ENCODE measurements at regions of chr3 and their contacts with region 1.

Region 1: DNA sequence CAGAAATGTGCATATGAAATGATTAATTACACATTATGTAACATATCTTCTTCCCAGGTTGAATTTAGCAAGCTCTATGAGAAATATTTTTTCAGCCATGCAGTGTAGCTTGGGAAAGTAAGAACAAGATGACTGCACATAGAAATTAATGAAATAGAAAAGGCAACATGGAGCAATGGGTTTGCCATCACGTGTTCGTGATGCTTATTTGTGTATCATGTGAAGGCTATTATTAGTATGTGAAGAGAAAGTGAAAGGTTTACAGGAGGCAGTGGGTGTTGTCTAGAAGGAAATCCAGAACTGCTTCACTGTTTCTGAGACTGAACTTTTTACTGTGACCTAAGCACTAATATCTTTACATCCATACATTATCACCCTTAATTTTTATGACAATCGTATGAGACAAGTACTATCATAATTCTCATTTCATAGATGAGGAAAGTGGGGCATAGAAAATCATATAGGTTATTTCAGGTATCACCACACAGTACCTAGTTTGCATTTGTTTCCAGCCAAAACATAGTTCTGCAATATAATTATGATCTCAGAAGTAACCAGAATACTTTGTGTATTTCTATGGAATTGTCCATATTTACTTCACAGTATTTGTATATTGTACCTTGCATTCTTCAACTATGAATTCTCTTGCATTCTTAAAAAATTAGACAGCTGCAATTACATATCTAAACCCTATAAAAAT is 14.9 kb downstream of the SERPINI1 start:
- DNase-seq: no peak
- H3K4me3 ChIP-seq: no peak overlapping the region
- H3K27ac ChIP-seq: no peak overlapping the region
- H3K4me1 ChIP-seq: no peaks in the 10 kb centered on the region
- H3K27me3 ChIP-seq: no peaks in the 10 kb centered on the region
- CTCF ChIP-seq: no peak
- EP300 ChIP-seq: no peak
- POLR2A ChIP-seq: no peak
- RAD21 ChIP-seq: no peak

Region 2: DNA sequence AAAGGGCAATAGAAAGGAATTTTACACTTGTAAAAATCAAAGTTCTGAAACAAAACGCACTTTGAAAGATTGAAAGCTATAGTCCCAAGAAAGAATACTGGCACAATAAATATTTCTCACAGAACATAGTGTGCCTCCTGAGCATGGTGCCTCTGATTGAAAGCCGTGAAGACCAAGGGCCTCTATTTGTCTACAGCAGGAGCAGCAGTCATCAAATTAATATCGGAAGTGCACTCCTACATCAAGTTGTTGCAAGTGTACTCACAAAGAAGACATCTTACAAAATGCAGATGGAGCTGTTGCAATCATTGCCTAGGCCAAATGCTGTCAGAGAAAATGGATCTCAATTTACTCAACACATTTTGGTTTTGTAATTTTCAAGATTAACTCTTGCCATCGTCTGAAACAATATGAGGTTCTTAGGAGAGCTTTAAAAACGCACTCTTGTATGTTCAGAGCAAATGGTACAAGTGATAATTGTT is 87.5 kb before region 1 on chr3:
- CTCF ChIA-PET with region 1: no interaction called
- POLR2A ChIA-PET with region 1: no interaction called
- DNase-seq: no peak
- H3K4me3 ChIP-seq: no peak overlapping the region
- H3K27ac ChIP-seq: no peak overlapping the region
- H3K4me1 ChIP-seq: peaks cover 0 to under 1% (median 0%) of the 10 kb centered on the region in 4 experiments; a peak in 1 of 7 replicates
- H3K27me3 ChIP-seq: no peaks in the 10 kb centered on the region
- CTCF ChIP-seq: no peak
- EP300 ChIP-seq: no peak
- POLR2A ChIP-seq: no peak
- RAD21 ChIP-seq: no peak

Region 3: GRCh38 chr3:167734498-167735232 is 15.8 kb before region 1 on chr3 and contains the start of gene PDCD10:
- CTCF ChIA-PET with region 1: interaction called, 18 read pairs
- POLR2A ChIA-PET with region 1: interaction called, 11 read pairs
- DNase-seq: peak; percentile 95 to 99
- H3K4me3 ChIP-seq: peak within 1 kb of the TSS; percentile 92 to 95 (median 94)
- H3K27ac ChIP-seq: peak within 1 kb of the TSS; percentile 96
- H3K4me1 ChIP-seq: peaks cover 0 to 6% (median 2%) of the 10 kb centered on the region in 4 experiments; a peak in 3 of 7 replicates
- H3K27me3 ChIP-seq: no peaks in the 10 kb centered on the region
- CTCF ChIP-seq: no peak
- EP300 ChIP-seq: no peak
- POLR2A ChIP-seq: peak; percentile 66 to 92
- RAD21 ChIP-seq: no peak
- total RNA-seq, gene PDCD10: 71.8 and 76.6 TPM in 2 replicates

Region 4: DNA sequence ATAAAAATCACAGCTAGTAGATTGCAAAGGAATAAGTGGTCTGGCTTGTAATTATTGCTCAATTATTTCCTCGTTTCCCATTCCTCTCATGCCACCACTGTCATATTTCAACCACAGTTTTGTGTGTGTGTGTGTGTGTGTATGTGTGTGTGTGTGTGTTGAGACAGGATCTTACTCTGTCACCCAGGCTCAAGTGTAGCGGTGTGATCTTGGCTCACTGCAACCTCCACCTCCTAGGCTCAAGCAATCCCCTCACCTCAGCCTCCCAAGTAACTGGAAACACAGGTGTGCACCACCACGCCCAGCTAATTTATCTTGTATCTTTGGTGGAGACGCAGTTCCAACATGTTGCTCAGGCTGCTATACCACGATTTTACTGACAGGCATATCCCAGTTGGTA is 12.8 kb after region 1 on chr3:
- CTCF ChIA-PET with region 1: no interaction called
- POLR2A ChIA-PET with region 1: no interaction called
- DNase-seq: no peak
- H3K4me3 ChIP-seq: no peak overlapping the region
- H3K27ac ChIP-seq: no peak overlapping the region
- H3K4me1 ChIP-seq: no peaks in the 10 kb centered on the region
- H3K27me3 ChIP-seq: no peaks in the 10 kb centered on the region
- CTCF ChIP-seq: no peak
- EP300 ChIP-seq: no peak
- POLR2A ChIP-seq: no peak
- RAD21 ChIP-seq: no peak

Region 5: GRCh38 chr3:167783781-167784180 is 33.4 kb after region 1 on chr3:
- CTCF ChIA-PET with region 1: no interaction called
- POLR2A ChIA-PET with region 1: no interaction called
- DNase-seq: no peak
- H3K4me3 ChIP-seq: no peak overlapping the region
- H3K27ac ChIP-seq: no peak overlapping the region
- H3K4me1 ChIP-seq: peaks cover 0 to 7% (median 0%) of the 10 kb centered on the region in 4 experiments; a peak in 2 of 7 replicates
- H3K27me3 ChIP-seq: no peaks in the 10 kb centered on the region
- CTCF ChIP-seq: no peak
- EP300 ChIP-seq: no peak
- POLR2A ChIP-seq: no peak
- RAD21 ChIP-seq: no peak

Measured in H1 (cell line).